ENCODE measurements at regions of chr6 and their contacts with region 1.

Region 1: GRCh38 chr6:102950967-102951366 is 1557.5 kb downstream of the GRIK2 start:
- DNase-seq: no peak
- H3K4me3 ChIP-seq: no peak overlapping the region
- H3K4me3 Mint-ChIP-seq: no peak overlapping the region
- H3K27ac Mint-ChIP-seq: no peak overlapping the region
- H3K4me1 ChIP-seq: peaks cover 42% of the 10 kb centered on the region
- H3K4me1 Mint-ChIP-seq: peaks cover 18% of the 10 kb centered on the region
- H3K27me3 ChIP-seq: no peaks in the 10 kb centered on the region
- H3K27me3 Mint-ChIP-seq: no peaks in the 10 kb centered on the region
- CTCF ChIP-seq: no peak

Region 2: DNA sequence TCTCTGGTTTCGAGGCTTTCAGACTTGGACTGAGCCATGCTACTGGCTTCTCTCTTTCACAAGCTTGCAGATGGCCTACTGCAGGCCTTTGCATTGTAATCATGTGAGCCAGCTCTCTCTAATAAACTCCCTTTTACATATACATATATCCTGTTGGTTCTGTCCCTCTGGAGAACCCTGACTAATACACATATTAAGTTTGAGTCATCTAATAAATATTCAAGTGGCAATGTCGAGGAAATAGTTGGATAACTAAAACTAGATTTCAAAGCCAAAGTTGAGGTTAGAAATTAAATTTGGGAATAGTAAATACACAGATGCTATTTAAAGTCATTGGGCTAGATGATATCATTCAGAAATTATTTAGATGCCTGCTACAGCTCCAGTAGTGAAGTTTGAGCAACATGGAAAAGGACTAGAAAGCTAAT is 214.0 kb before region 1 on chr6:
- CTCF ChIA-PET with region 1: no interaction called
- POLR2A ChIA-PET with region 1: no interaction called
- intact Hi-C with region 1: no loop called
- DNase-seq: no peak
- H3K4me3 ChIP-seq: no peak overlapping the region
- H3K4me3 Mint-ChIP-seq: no peak overlapping the region
- H3K27ac Mint-ChIP-seq: no peak overlapping the region
- H3K4me1 ChIP-seq: peaks cover 1% of the 10 kb centered on the region
- H3K4me1 Mint-ChIP-seq: peaks cover 2% of the 10 kb centered on the region
- H3K27me3 ChIP-seq: no peaks in the 10 kb centered on the region
- H3K27me3 Mint-ChIP-seq: no peaks in the 10 kb centered on the region
- CTCF ChIP-seq: no peak

Region 3: DNA sequence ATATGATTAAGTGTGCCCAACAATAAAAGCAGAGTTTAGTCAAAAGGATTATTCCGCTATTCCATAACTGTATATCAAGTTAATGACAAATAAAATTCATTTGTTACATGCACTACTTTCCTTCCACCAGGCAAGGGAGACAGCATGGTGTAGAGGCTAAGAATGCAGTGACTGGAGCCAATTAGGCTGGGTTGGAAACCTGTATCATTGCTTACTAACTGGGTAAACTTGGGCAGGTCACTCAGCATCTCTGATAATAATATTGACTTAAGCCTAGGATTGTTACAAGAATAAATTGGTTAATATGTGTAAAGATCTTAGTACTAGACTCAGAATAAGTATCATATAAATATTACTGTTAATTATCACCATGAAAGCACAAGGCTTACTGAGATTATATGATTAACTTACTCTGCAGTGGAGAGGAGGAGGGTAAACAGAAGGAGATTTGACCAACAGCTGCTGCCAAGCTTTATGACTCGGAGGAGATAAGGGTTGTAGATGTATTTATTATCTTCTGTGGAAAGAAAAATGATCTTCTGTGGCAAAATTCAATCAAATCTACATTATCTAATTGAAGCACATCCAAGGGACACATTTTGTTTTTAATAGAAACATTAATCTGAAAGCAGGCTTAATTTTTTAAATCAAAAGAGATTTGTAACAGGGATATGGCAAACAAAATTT is 97.6 kb before region 1 on chr6:
- CTCF ChIA-PET with region 1: no interaction called
- POLR2A ChIA-PET with region 1: no interaction called
- intact Hi-C with region 1: loop called (anchors 1 kb)
- DNase-seq: peak; percentile 50 to 57
- H3K4me3 ChIP-seq: no peak overlapping the region
- H3K4me3 Mint-ChIP-seq: no peak overlapping the region
- H3K27ac Mint-ChIP-seq: no peak overlapping the region
- H3K4me1 ChIP-seq: peaks cover 7% of the 10 kb centered on the region
- H3K4me1 Mint-ChIP-seq: peaks cover 13% of the 10 kb centered on the region
- H3K27me3 ChIP-seq: no peaks in the 10 kb centered on the region
- H3K27me3 Mint-ChIP-seq: no peaks in the 10 kb centered on the region
- CTCF ChIP-seq: no peak

Region 4: DNA sequence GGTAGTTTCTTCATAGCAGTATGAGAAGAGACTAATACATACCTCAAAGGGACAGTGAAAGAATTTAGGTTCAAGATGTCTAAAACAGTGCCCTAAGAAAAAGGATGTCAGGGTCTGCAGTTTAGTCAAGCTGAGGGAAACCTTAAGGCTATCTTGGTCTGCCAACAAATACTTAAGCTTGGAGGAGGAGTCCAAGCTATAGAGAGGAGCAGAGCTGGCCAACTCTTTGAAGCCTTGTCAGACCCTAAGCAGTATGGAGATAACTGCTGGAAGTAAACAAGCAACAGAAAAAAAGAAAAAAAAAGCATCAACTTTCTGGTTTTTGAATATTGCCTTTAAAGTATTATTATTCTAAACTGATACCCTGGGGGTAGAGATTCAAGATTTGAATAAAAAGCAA is 39.4 kb before region 1 on chr6:
- CTCF ChIA-PET with region 1: no interaction called
- POLR2A ChIA-PET with region 1: no interaction called
- intact Hi-C with region 1: no loop called
- DNase-seq: no peak
- H3K4me3 ChIP-seq: no peak overlapping the region
- H3K4me3 Mint-ChIP-seq: no peak overlapping the region
- H3K27ac Mint-ChIP-seq: no peak overlapping the region
- H3K4me1 ChIP-seq: no peaks in the 10 kb centered on the region
- H3K4me1 Mint-ChIP-seq: no peaks in the 10 kb centered on the region
- H3K27me3 ChIP-seq: no peaks in the 10 kb centered on the region
- H3K27me3 Mint-ChIP-seq: no peaks in the 10 kb centered on the region
- CTCF ChIP-seq: no peak

Region 5: DNA sequence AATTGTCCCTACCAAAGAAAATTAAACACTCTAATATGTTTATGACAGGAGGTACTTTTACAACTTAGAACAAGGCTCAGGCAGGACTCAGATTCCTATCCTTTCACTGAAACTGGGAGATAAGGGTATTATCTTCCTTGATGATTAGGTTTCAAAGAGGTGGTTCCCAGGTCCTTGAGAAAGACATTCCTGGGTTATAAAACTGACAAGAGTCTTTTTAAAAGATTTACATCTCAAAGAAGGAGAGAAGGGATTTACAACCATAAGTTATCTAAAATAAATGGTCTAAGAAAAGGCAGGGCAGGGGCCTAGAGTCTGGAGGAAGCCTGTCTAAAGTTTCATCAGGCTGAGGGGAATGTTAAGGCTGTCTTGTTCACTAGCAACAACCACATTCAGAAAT is 416.2 kb after region 1 on chr6:
- CTCF ChIA-PET with region 1: no interaction called
- POLR2A ChIA-PET with region 1: no interaction called
- intact Hi-C with region 1: loop called (anchors 10 kb)
- DNase-seq: peak; percentile 51 to 70
- H3K4me3 ChIP-seq: no peak overlapping the region
- H3K4me3 Mint-ChIP-seq: peak overlapping the region; percentile 35
- H3K27ac Mint-ChIP-seq: peak overlapping the region; percentile 79
- H3K4me1 ChIP-seq: peaks cover 18% of the 10 kb centered on the region
- H3K4me1 Mint-ChIP-seq: peaks cover 25% of the 10 kb centered on the region
- H3K27me3 ChIP-seq: no peaks in the 10 kb centered on the region
- H3K27me3 Mint-ChIP-seq: no peaks in the 10 kb centered on the region
- CTCF ChIP-seq: no peak